Gastrocnemius medialis (tissue), 4 donors: ENCODE measurements at regions of chr10 and their contacts with region 1.

Region 1: DNA sequence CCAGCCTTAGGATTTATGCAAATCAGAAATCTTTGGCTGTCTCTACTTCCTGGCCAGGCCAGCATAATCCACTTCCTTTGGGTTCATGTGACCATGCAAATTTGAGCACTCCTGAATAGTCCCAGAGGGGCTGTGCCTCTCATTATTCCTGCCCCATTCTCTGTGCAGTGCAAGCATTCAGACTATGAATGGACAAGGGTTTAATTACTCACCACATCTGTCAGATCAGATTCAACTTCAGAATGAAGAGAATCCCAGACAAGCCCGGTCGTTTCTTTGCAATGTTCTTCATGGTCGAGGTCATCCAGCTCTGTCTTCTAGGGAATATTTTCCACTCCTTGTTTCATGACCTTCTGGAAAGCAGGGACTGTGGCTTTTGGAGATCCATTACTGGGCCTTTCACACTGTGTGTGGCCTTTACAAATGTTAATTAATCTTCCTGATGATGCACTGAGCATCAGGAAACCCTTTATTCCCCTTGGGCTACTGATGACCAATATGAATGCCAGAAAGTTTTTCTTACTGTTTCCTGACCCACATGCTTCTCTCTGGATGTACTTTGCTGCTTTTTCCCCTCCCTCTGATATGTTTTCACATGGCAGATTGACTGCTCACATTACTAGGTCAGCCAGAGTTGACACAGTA is 217.6 kb upstream of the TCF7L2 start:
- DNase-seq: no peak
- ATAC-seq: peak in 1 of 2 donors; percentile 16
- H3K4me3 ChIP-seq: no peak overlapping the region
- H3K27ac ChIP-seq: no peak overlapping the region
- H3K4me1 ChIP-seq: peaks cover 0 to 4% of the 10 kb centered on the region in 2 donors
- H3K27me3 ChIP-seq: no peaks in the 10 kb centered on the region
- CTCF ChIP-seq: no peak
- POLR2A ChIP-seq: no peak

Region 2: GRCh38 chr10:112775381-112775780 is 43.0 kb after region 1 on chr10:
- in situ Hi-C with region 1: no loop called
- intact Hi-C with region 1: no loop called
- DNase-seq: no peak
- ATAC-seq: no peak
- H3K4me3 ChIP-seq: no peak overlapping the region
- H3K27ac ChIP-seq: no peak overlapping the region
- H3K4me1 ChIP-seq: no peaks in the 10 kb centered on the region
- H3K27me3 ChIP-seq: no peaks in the 10 kb centered on the region
- CTCF ChIP-seq: no peak
- POLR2A ChIP-seq: no peak

Region 3: DNA sequence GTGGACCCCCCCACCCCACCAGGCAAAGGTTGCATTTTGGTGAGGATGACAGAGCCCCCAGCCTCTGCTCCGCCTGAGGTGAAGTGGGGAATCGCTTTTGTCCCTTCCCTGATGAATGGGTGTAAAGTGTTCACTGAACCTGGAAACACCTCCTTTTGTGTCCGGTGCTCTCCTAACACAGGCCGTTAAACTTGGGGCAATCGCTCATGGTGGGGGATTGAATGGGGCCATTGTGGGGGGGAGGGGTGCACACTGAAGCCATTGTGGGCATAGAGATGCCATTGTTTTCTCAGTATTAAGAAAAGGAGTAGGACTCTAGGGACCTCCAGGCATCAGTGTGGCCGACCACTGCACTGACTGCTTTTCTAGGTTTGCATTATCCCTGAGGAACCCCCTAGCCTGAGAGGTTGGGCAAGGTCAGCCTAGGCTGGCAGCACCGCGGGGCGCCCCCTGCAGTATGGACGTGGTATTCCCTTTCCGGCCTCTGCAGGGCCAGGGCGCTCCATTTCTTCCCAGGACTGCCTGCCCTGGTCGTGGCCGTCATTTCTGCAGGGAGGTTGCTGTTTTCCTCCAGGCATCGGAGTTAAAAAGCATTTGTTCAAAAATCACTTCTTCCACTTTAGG is 375.9 kb after region 1 on chr10:
- in situ Hi-C with region 1: loop called in 1 of 4 experiments (anchors 25 kb)
- intact Hi-C with region 1: no loop called
- DNase-seq: no peak
- ATAC-seq: no peak
- H3K4me3 ChIP-seq: no peak overlapping the region
- H3K27ac ChIP-seq: no peak overlapping the region
- H3K4me1 ChIP-seq: peaks cover 10 to 12% of the 10 kb centered on the region in 2 donors
- H3K27me3 ChIP-seq: no peaks in the 10 kb centered on the region
- CTCF ChIP-seq: peak in 3 of 5 experiments; percentile 40 to 50 (median 43)
- POLR2A ChIP-seq: no peak